ENCODE measurements at regions of chr1 and their contacts with region 1.

Region 1: DNA sequence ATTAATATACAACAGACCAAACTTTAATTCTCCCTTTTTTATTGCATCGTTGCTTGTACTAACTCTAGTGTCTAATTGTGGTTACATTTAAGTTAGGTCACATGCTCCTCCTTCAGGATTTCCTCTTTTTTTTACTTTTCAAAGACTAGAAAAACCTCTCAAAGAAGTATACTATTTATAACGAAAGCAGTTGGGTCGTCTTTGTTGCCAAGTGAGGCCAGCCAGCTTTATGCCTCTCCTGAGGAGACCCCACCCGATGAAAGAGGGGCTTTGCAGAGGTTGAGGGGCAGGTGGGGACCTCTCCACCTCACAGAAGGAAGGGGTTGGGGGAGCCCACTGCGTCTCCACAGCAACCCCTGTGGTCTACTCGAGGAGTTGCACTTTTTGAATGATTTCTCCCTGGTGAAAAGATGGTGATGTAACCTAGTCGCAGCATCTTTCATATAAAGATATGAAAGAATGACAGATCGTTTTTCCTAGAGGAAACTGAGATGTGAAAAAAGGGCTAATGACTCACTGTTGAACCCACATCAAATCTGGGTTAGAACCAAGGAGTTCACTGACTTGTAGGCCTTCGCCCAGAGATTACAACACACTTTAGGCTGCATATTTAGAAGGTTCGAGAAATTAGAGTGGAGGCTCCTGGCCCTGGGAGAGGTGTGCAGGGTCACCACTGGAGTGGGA is 6.4 kb downstream of the TGFB2 start:
- DNase-seq: peak; percentile 33
- ATAC-seq: peak; percentile 78
- H3K4me3 Mint-ChIP-seq: peak overlapping the region; percentile 84
- H3K27ac Mint-ChIP-seq: peak overlapping the region; percentile 89
- H3K4me1 Mint-ChIP-seq: peaks cover 53% of the 10 kb centered on the region
- H3K27me3 Mint-ChIP-seq: no peaks in the 10 kb centered on the region
- CTCF ChIP-seq: no peak

Region 2: GRCh38 chr1:218339267-218339831 is 12.2 kb before region 1 on chr1:
- CTCF ChIA-PET with region 1: interaction called, 4 read pairs
- POLR2A ChIA-PET with region 1: no interaction called
- intact Hi-C with region 1: loop called (anchors 1 kb)
- DNase-seq: no peak
- ATAC-seq: peak; percentile 28
- H3K4me3 Mint-ChIP-seq: no peak overlapping the region
- H3K27ac Mint-ChIP-seq: no peak overlapping the region
- H3K4me1 Mint-ChIP-seq: no peaks in the 10 kb centered on the region
- H3K27me3 Mint-ChIP-seq: no peaks in the 10 kb centered on the region
- CTCF ChIP-seq: peak; percentile 51

Region 3: DNA sequence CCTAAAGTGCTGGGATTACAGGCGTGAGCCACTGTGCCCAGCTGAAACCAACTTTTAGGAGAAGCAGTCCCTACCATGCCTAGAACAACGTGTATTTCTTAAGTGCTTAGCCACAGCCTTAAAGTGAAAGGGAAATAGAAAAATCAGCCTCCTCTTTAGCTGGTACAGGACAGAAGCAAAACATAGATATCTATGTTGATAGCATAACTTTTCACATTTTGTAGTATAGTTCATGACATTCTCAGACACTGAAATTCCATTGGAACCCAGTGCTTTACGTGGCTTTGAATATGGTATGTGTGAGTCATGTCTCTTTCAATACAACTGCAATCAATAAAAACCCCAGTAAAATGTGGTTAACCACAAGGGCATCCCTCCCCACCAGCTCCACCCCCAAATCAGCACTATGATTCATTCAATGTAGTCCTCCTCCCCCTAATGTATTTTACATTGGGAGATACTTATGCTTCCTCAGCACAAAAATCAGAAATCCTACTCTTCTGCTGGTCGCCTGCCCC is 25.7 kb after region 1 on chr1:
- CTCF ChIA-PET with region 1: no interaction called
- POLR2A ChIA-PET with region 1: no interaction called
- intact Hi-C with region 1: loop called (anchors 1 kb)
- DNase-seq: peak; percentile 22
- ATAC-seq: peak; percentile 91
- H3K4me3 Mint-ChIP-seq: no peak overlapping the region
- H3K27ac Mint-ChIP-seq: no peak overlapping the region
- H3K4me1 Mint-ChIP-seq: peaks cover 19% of the 10 kb centered on the region
- H3K27me3 Mint-ChIP-seq: peaks cover 3% of the 10 kb centered on the region
- CTCF ChIP-seq: no peak

Region 4: DNA sequence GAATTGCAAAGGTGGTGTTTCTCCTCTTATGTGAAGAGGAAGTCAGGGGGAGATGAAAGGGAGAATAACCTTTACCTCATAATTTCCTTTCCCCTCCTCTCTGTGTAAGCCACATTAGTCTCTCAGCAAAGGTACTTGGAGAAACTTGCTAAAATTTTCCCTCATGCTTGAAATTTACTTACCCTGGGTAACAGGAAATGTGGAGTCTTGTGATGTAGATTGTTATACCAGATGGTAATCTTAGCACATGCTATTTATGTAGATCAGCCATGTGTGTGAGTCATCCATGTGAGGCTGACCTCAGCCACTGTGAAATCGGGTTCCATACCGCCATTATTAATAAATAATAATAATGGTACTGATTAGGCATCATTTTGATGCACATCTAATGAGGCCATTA is 122.0 kb after region 1 on chr1:
- CTCF ChIA-PET with region 1: no interaction called
- POLR2A ChIA-PET with region 1: no interaction called
- intact Hi-C with region 1: loop called (anchors 2 kb)
- DNase-seq: no peak
- ATAC-seq: peak; percentile 74
- H3K4me3 Mint-ChIP-seq: peak overlapping the region; percentile 9
- H3K27ac Mint-ChIP-seq: peak overlapping the region; percentile 83
- H3K4me1 Mint-ChIP-seq: peaks cover 46% of the 10 kb centered on the region
- H3K27me3 Mint-ChIP-seq: no peaks in the 10 kb centered on the region
- CTCF ChIP-seq: no peak

Region 5: DNA sequence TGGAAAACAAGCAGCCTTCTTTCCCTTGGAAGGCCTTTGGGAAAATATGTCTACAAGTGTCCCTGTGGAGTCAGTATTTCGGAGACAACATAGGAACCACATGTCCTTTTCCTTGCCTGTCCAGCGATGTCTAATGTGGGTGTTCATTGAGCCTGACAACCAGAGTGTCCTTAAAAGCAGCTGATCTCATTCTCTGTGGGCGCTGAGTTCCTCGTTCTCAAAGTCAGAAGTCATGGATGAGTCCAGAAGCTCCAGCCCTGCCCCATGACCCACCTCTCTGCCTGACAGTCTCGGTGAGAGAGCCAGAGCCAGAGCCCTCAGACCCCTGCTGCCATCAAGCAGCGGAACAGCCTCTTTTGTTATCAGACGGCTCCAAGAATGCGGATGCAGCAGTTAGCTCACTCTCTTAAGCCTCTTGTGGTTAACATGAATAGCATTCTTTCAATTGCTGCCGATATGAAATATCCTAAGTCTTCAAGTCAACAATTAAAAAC is 322.8 kb after region 1 on chr1:
- CTCF ChIA-PET with region 1: no interaction called
- POLR2A ChIA-PET with region 1: no interaction called
- intact Hi-C with region 1: no loop called
- DNase-seq: no peak
- ATAC-seq: no peak
- H3K4me3 Mint-ChIP-seq: no peak overlapping the region
- H3K27ac Mint-ChIP-seq: no peak overlapping the region
- H3K4me1 Mint-ChIP-seq: no peaks in the 10 kb centered on the region
- H3K27me3 Mint-ChIP-seq: peaks cover 6% of the 10 kb centered on the region
- CTCF ChIP-seq: no peak

Region 6: DNA sequence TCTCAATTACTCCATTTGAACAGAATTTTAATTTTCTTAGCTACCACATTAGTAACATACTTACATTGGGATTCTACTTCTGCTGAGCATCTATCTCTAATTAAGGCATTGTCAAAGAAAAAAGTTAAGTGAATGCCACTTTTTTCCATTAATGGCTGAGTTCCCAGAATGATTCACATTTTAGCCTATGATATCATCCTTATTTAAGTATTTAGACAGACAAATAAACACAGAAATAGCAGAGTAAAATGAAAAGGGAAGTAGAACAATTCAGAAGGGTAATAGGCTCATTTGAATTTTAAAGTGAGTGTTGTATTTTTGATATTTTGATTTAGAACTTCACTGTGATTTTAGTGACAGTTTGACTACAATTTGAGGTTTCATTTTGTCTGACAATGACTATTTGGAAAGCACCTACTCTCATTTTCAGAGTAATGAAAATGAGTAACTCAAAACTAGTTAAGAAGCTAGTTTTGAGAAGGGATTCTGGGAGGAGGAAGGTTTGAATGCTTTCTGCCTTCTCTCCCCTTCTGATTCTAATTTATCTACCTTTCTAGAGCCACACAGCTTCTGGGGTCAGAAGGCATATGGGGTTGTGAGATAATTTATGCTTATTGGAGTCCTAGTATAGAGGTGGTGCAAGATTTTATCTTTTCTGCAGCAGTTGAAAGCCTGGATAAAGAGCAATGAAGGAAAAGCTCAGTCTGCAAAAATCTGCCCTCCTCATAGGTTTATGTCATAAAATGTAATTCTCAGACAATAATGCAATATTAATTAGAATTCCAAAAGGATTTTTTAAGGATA is 837.7 kb after region 1 on chr1:
- CTCF ChIA-PET with region 1: no interaction called
- POLR2A ChIA-PET with region 1: no interaction called
- intact Hi-C with region 1: loop called (anchors 2 kb)
- DNase-seq: no peak
- ATAC-seq: peak; percentile 61
- H3K4me3 Mint-ChIP-seq: peak overlapping the region; percentile 74
- H3K27ac Mint-ChIP-seq: peak overlapping the region; percentile 91
- H3K4me1 Mint-ChIP-seq: peaks cover 61% of the 10 kb centered on the region
- H3K27me3 Mint-ChIP-seq: no peaks in the 10 kb centered on the region
- CTCF ChIP-seq: no peak

Region 7: GRCh38 chr1:219244864-219245263 is 893.3 kb after region 1 on chr1:
- CTCF ChIA-PET with region 1: no interaction called
- POLR2A ChIA-PET with region 1: interaction called, 12 read pairs
- intact Hi-C with region 1: no loop called
- DNase-seq: no peak
- ATAC-seq: no peak
- H3K4me3 Mint-ChIP-seq: no peak overlapping the region
- H3K27ac Mint-ChIP-seq: no peak overlapping the region
- H3K4me1 Mint-ChIP-seq: no peaks in the 10 kb centered on the region
- H3K27me3 Mint-ChIP-seq: no peaks in the 10 kb centered on the region
- CTCF ChIP-seq: no peak

Measured in activated B cell treated with CpG ODN at 0.5 μM for 24 hours (primary cell).